ENCODE measurements at regions of chr19 and their contacts with region 1.

Region 1: DNA sequence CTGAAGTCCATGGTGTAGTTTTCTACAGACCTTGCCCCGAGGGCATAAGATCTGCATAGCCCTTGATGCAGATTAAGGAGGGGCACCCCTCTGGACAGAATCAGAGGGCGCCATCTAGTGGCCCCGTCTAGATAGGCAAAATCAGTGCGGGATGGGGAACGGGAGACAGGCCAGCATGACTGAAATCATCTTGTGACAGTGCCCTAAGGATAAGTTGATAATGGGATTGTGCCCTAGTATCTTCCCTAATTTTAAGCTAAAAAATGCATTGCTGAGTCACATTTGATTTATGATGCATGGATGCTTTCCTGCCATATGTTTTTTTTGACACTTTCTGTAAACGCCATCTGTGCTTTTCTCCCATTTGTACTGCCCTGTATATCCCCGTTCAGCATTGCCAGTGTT is 19.0 kb upstream of the GPI start:
- DNase-seq: peak; percentile 77
- H3K4me3 ChIP-seq: no peak overlapping the region
- H3K27ac ChIP-seq: no peak overlapping the region
- H3K4me1 ChIP-seq: no peaks in the 10 kb centered on the region
- H3K27me3 ChIP-seq: no peaks in the 10 kb centered on the region
- CTCF ChIP-seq: peak; percentile 85 to 95
- POLR2A ChIP-seq: no peak

Region 2: DNA sequence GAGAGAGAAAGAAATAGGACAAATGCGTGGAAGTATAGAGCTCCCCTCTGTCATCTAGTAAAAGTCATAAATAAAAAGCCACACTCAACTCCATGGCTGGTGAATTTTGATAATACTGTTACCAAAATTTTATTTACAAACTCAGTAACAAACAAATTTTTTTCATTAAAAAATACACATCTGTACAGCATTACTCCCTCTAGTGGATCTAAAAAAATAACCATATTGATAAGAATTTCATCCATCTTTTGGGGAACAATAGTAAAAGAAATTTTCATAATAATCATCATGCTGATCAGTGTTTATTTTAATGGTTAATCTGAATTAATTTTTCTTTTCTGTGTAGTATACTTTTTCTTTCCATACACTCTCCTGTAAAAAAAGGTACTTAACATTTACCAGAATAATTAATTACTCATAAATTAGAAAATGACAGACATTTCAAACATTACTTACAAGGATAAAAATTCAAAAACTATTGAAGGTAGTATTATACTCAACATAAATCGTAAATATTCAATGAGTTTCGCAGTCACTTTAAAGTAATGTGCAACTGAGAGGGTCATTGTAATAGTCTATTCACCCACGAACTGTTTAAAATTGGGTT is 347.1 kb before region 1 on chr19:
- CTCF ChIA-PET with region 1: no interaction called
- POLR2A ChIA-PET with region 1: no interaction called
- dilution Hi-C with region 1: no loop called
- intact Hi-C with region 1: no loop called
- DNase-seq: peak; percentile 21
- H3K4me3 ChIP-seq: no peak overlapping the region
- H3K27ac ChIP-seq: no peak overlapping the region
- H3K4me1 ChIP-seq: no peaks in the 10 kb centered on the region
- H3K27me3 ChIP-seq: peaks cover 3 to 6% of the 10 kb centered on the region in 2 experiments
- CTCF ChIP-seq: peak; percentile 11 to 17
- POLR2A ChIP-seq: no peak

Region 3: GRCh38 chr19:34171877-34172660 is 173.9 kb before region 1 on chr19 and contains the start of gene LSM14A:
- CTCF ChIA-PET with region 1: no interaction called
- POLR2A ChIA-PET with region 1: no interaction called
- dilution Hi-C with region 1: no loop called
- intact Hi-C with region 1: loop called (anchors 5 kb)
- DNase-seq: peak; percentile 85
- H3K4me3 ChIP-seq: peak within 1 kb of the TSS; percentile 70 to 96 (median 80)
- H3K27ac ChIP-seq: peak within 1 kb of the TSS; percentile 97
- H3K4me1 ChIP-seq: peaks cover 35% of the 10 kb centered on the region
- H3K27me3 ChIP-seq: peaks cover 3 to 6% of the 10 kb centered on the region in 2 experiments
- CTCF ChIP-seq: no peak
- POLR2A ChIP-seq: peak; percentile 96
- total RNA-seq, gene LSM14A: 114 and 122 TPM in 2 replicates

Region 4: DNA sequence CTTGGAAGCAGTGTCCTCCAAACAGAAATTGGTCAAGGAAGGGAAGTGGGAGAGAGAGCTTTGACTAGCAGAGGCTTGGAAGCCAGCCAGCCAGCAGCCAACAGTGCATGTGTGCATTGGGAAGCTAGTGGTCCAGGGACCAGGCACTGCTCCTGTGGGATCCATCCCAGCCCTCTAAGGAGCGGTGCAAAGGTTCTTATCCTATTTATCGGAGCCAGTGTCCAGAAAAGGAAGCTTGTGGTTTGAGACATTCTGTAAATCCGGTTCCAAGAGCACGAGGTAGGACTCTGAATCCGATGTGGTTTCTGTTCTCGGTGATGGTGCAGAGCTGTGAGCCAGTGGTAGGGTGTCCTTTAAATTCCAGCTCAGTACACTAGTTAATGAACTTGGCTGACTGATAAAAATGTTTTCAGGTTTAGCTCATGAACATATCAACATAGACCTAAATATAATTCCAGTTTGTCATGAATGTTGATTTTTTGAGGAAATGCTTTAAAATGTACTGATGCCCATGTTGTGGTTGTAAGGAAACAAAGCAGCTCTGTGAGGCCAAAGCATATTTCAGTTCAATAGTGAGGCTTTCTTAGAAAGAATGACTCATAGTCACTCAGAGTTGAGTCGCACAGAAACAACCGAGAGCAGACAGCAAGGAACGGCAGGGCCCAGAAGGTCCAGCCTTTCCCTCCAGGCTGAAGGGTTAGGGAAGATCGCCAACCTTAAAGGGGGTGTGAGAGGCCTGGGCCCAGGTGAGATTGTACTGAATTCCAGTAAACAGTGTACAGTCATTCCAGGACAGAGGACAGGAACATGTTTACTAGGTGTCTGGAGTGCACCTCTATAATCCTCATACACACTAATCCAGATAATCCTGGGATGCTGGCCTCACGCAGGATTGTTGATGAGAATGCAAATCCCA is 113.1 kb before region 1 on chr19:
- CTCF ChIA-PET with region 1: interaction called, 12 read pairs
- POLR2A ChIA-PET with region 1: interaction called, 3 read pairs
- dilution Hi-C with region 1: no loop called
- intact Hi-C with region 1: loop called (anchors 1 kb)
- DNase-seq: peak; percentile 87
- H3K4me3 ChIP-seq: no peak overlapping the region
- H3K27ac ChIP-seq: peak overlapping the region; percentile 45
- H3K4me1 ChIP-seq: peaks cover 29% of the 10 kb centered on the region
- H3K27me3 ChIP-seq: no peaks in the 10 kb centered on the region
- CTCF ChIP-seq: no peak
- POLR2A ChIP-seq: no peak